Activated naive CD4-positive, alpha-beta T cell treated with anti-CD3 and anti-CD28 coated beads for 36 hours (primary cell): ENCODE measurements at regions of chr13 and their contacts with region 1.

Region 1: GRCh38 chr13:44050450-44051063 is 170.9 kb downstream of the LACC1 start:
- DNase-seq: no peak
- H3K4me3 Mint-ChIP-seq: no peak overlapping the region
- H3K27ac Mint-ChIP-seq: no peak overlapping the region
- H3K4me1 Mint-ChIP-seq: peaks cover 5% of the 10 kb centered on the region
- H3K27me3 Mint-ChIP-seq: peaks cover 25% of the 10 kb centered on the region

Region 2: DNA sequence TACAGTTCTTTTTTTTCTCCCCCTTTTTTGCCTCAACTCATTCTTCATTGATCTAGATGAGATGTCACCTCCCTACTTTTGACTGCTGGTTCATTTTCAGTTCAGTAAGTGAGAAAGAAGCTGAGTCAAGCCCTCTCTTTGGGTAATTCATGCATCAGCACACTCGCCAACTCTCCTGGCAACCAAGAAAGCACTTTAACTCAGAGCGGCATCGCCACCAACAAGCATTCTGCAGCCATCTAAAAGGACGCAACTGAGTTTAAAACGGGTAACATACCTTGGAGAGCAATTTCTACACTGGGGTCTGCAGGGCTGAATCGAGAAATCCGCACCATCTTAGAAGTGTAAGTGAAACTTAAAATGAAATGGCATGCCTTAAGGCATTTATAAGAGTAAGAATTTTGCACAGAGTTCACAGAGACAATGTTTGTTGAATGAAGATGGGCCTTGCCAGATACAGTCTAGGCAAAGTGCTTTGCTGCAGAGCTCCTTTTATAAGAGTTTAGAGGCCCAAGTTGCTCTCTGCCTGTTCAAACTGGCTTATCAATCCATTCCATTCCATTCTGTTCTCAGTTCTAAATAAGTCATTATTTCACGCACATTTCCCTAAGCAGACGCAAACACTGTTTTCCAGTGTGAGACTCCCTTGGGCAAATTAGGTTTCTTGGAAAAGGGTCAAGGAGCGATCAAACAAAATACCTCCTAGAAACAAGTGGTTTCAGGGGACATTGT is 601.8 kb before region 1 on chr13:
- CTCF ChIA-PET with region 1: no interaction called
- intact Hi-C with region 1: no loop called
- DNase-seq: no peak
- H3K4me3 Mint-ChIP-seq: no peak overlapping the region
- H3K27ac Mint-ChIP-seq: no peak overlapping the region
- H3K4me1 Mint-ChIP-seq: no peaks in the 10 kb centered on the region
- H3K27me3 Mint-ChIP-seq: peaks cover 11% of the 10 kb centered on the region

Region 3: DNA sequence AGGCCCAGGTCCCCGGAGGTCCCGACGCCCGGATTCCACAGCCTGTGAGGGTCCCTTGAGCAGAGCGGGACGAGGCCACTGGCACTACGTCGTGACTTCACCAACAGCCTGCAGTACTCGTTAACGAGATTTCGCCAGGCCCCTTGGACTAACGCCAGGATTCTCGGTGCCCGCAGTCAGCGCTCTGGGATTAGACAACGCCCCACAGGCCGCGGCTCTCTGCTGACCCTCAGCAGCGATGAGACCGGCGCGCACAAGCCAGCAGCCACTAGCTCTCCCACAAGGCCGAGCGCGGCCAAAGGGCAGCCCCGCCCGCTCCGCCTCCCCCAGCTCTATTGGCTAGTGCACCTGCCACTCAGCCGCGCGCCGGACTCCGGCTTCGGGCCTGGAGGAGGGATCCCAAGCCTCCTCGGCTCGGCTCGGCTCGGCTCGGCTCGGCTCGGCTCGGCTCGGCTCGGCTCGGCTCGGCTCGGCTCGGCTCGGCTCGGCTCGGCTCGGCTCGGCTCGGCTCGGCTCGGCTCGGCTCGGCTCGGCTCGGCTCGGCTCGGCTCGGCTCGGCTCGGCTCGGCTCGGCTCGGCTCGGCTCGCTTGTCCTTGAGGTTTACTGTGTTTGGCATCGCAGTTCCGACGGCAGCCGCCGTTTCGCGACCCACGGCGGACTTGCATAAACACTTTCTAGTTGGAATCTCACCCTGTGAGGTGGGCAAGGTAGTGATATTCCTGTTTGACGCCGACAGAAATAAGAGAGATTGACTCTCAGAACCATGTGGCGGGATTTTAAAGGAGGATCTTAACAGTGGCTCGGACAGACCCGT is 91.4 kb after region 1 on chr13:
- CTCF ChIA-PET with region 1: interaction called, 3 read pairs
- intact Hi-C with region 1: loop called (anchors 5 kb)
- DNase-seq: peak; percentile 95
- H3K4me3 Mint-ChIP-seq: peak overlapping the region; percentile 89
- H3K27ac Mint-ChIP-seq: peak overlapping the region; percentile 86
- H3K4me1 Mint-ChIP-seq: peaks cover 14% of the 10 kb centered on the region
- H3K27me3 Mint-ChIP-seq: no peaks in the 10 kb centered on the region

Region 4: GRCh38 chr13:44191504-44192171 is 141.1 kb after region 1 on chr13:
- CTCF ChIA-PET with region 1: no interaction called
- intact Hi-C with region 1: loop called (anchors 10 kb)
- DNase-seq: peak; percentile 59
- H3K4me3 Mint-ChIP-seq: no peak overlapping the region
- H3K27ac Mint-ChIP-seq: peak overlapping the region; percentile 20
- H3K4me1 Mint-ChIP-seq: peaks cover 35% of the 10 kb centered on the region
- H3K27me3 Mint-ChIP-seq: no peaks in the 10 kb centered on the region

Region 5: DNA sequence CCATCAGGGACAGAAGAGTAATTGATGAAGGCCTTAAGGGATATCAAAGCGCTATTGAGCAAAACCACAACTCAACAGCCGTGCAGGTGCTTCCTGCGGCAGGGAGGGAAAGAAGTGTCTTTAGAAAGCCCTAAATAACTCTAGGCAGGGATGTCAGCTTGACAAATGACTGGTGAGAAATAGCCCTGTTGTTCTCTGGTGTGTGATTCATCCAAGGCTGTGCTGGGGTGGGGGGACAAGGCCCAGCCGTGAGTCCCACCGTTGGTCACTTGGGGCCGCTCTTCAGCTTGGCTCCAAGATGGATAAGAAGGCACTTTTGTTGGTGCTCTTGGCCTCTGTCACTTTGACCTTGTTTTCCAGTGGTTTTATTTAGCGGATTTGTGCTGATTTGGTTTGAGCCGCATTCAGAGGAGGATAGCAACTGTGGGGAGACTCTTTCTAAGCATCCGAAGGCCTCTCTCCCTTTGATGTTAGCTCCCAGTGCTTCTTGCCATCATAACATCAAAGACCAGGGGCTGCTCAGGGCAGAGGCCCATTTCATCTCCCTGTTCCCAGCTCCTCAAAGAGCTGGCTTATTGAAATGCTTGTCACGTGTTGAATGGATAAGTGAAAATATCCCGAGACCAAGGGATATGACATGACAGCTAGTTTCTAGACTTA is 192.8 kb after region 1 on chr13:
- CTCF ChIA-PET with region 1: interaction called, 3 read pairs
- intact Hi-C with region 1: loop called (anchors 5 kb)
- DNase-seq: peak; percentile 69
- H3K4me3 Mint-ChIP-seq: no peak overlapping the region
- H3K27ac Mint-ChIP-seq: no peak overlapping the region
- H3K4me1 Mint-ChIP-seq: peaks cover 10% of the 10 kb centered on the region
- H3K27me3 Mint-ChIP-seq: peaks cover 4% of the 10 kb centered on the region